Dorsolateral prefrontal cortex (tissue), 120 donors: ENCODE measurements at regions of chr5 and their contacts with region 1.

Region 1: GRCh38 chr5:14958196-14958595 is 86.6 kb upstream of the ANKH start:
- DNase-seq: no peak
- H3K4me3 ChIP-seq: no peak overlapping the region
- H3K27ac ChIP-seq: no peak overlapping the region
- H3K27me3 ChIP-seq: no peaks in the 10 kb centered on the region
- CTCF ChIP-seq: no peak

Region 2: DNA sequence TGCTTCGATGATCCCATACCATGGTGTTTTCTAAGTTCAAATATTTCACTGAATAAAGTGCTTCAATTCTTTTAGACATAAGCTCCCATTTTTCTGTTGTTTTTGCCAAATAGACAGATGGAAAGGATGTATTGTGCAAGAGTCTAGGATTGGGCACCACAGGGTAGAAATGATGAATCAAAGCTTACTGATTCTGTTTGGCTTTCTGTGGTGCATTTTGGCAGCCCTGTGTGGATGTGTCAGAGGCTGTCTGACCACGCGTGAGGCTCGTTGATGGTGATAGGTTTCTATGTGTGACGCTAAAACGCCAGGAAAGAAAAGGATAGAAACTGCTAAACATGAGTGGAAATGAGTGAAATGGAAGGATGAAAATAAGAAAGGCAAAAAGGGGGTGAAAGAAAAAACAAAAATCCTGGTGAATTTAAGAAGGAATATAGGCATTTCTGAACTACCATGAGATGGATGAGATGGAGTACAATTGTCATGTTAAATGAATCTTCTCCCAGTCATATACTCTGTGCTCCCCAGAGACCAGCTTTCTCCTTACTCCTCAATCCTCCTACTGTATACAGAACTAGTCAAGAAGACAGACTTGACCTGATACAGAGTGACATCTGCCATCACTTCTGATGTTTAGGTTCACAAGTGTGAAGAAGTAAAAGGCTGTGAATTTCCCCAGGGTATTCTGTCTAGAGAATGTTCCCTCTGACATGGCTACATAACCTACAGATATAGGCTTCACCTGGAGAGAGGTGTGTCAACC is 141.0 kb before region 1 on chr5:
- intact Hi-C with region 1: no loop called
- DNase-seq: peak in 5 of 10 donors; percentile 30 to 77 (median 70)
- H3K4me3 ChIP-seq: no peak overlapping the region
- H3K27ac ChIP-seq: peak overlapping the region in 32 of 59 donors; percentile 2 to 75 (median 36)
- H3K27me3 ChIP-seq: no peaks in the 10 kb centered on the region
- CTCF ChIP-seq: no peak

Region 3: GRCh38 chr5:14900731-14901461 is 57.3 kb before region 1 on chr5:
- intact Hi-C with region 1: no loop called
- DNase-seq: no peak
- H3K4me3 ChIP-seq: no peak overlapping the region
- H3K27ac ChIP-seq: peak overlapping the region in 5 of 59 donors; percentile 14 to 66 (median 24)
- H3K27me3 ChIP-seq: no peaks in the 10 kb centered on the region
- CTCF ChIP-seq: no peak

Region 4: GRCh38 chr5:14925326-14925725 is 32.9 kb before region 1 on chr5:
- intact Hi-C with region 1: no loop called
- DNase-seq: no peak
- H3K4me3 ChIP-seq: no peak overlapping the region
- H3K27ac ChIP-seq: no peak overlapping the region
- H3K27me3 ChIP-seq: no peaks in the 10 kb centered on the region
- CTCF ChIP-seq: no peak

Region 5: GRCh38 chr5:14996997-14997396 is 38.8 kb after region 1 on chr5:
- intact Hi-C with region 1: loop called in 1 of 2 experiments (anchors 5 kb)
- DNase-seq: no peak
- H3K4me3 ChIP-seq: no peak overlapping the region
- H3K27ac ChIP-seq: no peak overlapping the region
- H3K27me3 ChIP-seq: no peaks in the 10 kb centered on the region
- CTCF ChIP-seq: no peak